ENCODE measurements at regions of chr17 and their contacts with region 1.

Region 1: DNA sequence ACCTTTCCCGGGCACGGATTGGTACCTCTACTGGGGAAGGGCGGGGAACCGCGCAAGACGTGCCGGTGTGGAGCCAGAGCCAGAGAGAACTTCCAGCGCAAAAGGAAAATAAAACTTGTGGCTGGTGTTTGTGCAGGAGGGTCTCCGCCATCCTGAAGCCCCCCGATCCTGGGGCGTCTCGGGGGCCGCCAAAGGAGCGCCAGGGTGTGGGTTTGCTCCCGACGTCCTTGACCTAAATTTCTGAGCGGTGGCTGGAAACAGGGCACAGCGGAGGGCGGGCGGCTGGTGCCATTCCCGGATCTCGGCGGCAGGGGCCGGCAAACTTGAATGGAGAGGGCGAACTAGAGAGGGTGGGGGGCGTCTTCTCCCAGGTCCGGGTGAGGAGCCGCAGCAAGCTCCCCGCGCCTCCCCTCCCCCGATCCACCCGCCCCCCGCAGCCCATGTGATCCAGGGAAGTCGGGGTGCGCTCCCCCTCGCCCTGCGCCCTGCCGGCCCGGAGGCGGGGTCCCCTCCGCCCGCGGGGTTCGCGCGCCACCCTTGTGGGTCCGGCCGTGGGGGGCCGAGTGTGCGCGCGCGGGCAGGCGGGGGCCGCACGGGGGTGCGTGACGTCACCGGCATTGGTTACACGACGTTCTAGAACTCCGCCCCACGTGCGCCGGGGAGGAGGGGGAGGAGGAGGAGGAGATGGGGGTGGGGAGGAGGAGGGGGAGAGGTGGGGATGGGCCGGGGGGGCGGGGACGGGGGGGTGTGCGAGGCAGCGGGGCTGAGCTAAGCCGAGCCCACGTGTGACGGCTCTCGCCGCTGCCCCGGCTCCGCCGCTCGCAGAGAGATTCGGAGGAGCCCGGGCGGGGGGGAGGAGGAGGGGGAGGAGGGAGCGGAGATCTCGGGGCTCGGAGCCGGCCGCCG is at the start of gene MSI2:
- DNase-seq: peak; percentile 87 to 97 (median 92)
- ATAC-seq: peak; percentile 76
- H3K4me3 ChIP-seq: peak within 1 kb of the TSS; percentile 73 to 81
- H3K4me3 Mint-ChIP-seq: peak within 1 kb of the TSS; percentile 92
- H3K27ac ChIP-seq: peak within 1 kb of the TSS; percentile 64 to 84
- H3K27ac Mint-ChIP-seq: peak within 1 kb of the TSS; percentile 93
- H3K4me1 ChIP-seq: peaks cover 37% of the 10 kb centered on the region
- H3K4me1 Mint-ChIP-seq: peaks cover 49% of the 10 kb centered on the region
- H3K27me3 ChIP-seq: no peaks in the 10 kb centered on the region
- H3K27me3 Mint-ChIP-seq: no peaks in the 10 kb centered on the region
- CTCF ChIP-seq: no peak
- total RNA-seq, gene MSI2: 130 to 135 TPM

Region 2: DNA sequence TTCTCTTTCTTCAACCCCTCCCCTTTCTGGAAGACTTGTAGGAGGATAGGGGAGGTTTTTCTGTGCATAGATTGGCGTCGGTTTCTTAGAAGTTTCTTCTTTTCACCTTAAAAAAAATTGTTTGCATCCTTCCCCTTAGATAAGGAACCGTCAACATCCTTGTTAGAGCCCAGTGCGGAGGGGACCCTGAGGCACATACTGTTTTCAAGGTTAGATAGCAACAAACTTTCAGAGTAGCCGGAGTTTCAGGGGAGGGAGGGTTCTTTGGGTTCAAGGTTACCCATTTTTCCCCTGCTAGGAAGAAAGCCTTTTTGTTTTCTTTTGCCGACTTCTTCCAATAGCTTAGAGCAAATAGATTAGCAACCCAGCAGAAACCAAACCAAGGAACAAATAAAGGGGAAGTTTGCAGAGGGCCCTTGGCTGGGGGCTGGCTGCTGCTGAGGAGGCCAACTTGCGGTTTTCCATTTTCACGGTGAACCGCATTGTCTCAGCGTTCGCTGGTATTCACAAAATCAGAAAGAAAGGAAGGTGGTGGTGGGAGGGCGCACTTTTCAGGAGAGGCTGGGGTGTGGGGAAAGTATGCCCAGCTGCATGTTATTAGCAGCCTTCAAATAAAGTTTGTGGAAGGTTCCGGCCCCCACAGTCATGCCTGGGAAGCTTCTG is 29.1 kb after region 1 on chr17:
- CTCF ChIA-PET with region 1: no interaction called
- POLR2A ChIA-PET with region 1: interaction called, 3 read pairs
- intact Hi-C with region 1: loop called in 1 of 2 experiments (anchors 2 kb)
- DNase-seq: peak in 6 of 9 experiments; percentile 16 to 58 (median 36)
- ATAC-seq: peak; percentile 24
- H3K4me3 ChIP-seq: no peak overlapping the region
- H3K4me3 Mint-ChIP-seq: peak overlapping the region; percentile 50
- H3K27ac ChIP-seq: peak overlapping the region in 1 of 2 experiments; percentile 1
- H3K27ac Mint-ChIP-seq: peak overlapping the region; percentile 66
- H3K4me1 ChIP-seq: peaks cover 39% of the 10 kb centered on the region
- H3K4me1 Mint-ChIP-seq: peaks cover 79% of the 10 kb centered on the region
- H3K27me3 ChIP-seq: no peaks in the 10 kb centered on the region
- H3K27me3 Mint-ChIP-seq: no peaks in the 10 kb centered on the region
- CTCF ChIP-seq: no peak

Region 3: GRCh38 chr17:57604771-57605674 is 349.0 kb after region 1 on chr17:
- CTCF ChIA-PET with region 1: no interaction called
- POLR2A ChIA-PET with region 1: no interaction called
- intact Hi-C with region 1: loop called (anchors 5 kb)
- DNase-seq: peak in 8 of 9 experiments; percentile 15 to 83 (median 60)
- ATAC-seq: peak; percentile 60
- H3K4me3 ChIP-seq: peak overlapping the region in 1 of 2 experiments; percentile 8
- H3K4me3 Mint-ChIP-seq: peak overlapping the region; percentile 76
- H3K27ac ChIP-seq: peak overlapping the region; percentile 67 to 81
- H3K27ac Mint-ChIP-seq: peak overlapping the region; percentile 94
- H3K4me1 ChIP-seq: peaks cover 99% of the 10 kb centered on the region
- H3K4me1 Mint-ChIP-seq: peaks cover 95% of the 10 kb centered on the region
- H3K27me3 ChIP-seq: no peaks in the 10 kb centered on the region
- H3K27me3 Mint-ChIP-seq: no peaks in the 10 kb centered on the region
- CTCF ChIP-seq: no peak

Region 4: GRCh38 chr17:58006924-58007780 is 751.1 kb after region 1 on chr17 and contains the start of gene SRSF1:
- CTCF ChIA-PET with region 1: no interaction called
- POLR2A ChIA-PET with region 1: no interaction called
- intact Hi-C with region 1: loop called (anchors 2 kb)
- DNase-seq: peak; percentile 93 to 100 (median 98)
- ATAC-seq: peak; percentile 86
- H3K4me3 ChIP-seq: peak within 1 kb of the TSS; percentile 90 to 100
- H3K4me3 Mint-ChIP-seq: peak within 1 kb of the TSS; percentile 100
- H3K27ac ChIP-seq: peak within 1 kb of the TSS; percentile 85 to 97
- H3K27ac Mint-ChIP-seq: peak within 1 kb of the TSS; percentile 100
- H3K4me1 ChIP-seq: peaks cover 36% of the 10 kb centered on the region
- H3K4me1 Mint-ChIP-seq: peaks cover 55% of the 10 kb centered on the region
- H3K27me3 ChIP-seq: no peaks in the 10 kb centered on the region
- H3K27me3 Mint-ChIP-seq: no peaks in the 10 kb centered on the region
- CTCF ChIP-seq: no peak
- total RNA-seq, gene SRSF1: 79.2 to 94.1 TPM

Region 5: DNA sequence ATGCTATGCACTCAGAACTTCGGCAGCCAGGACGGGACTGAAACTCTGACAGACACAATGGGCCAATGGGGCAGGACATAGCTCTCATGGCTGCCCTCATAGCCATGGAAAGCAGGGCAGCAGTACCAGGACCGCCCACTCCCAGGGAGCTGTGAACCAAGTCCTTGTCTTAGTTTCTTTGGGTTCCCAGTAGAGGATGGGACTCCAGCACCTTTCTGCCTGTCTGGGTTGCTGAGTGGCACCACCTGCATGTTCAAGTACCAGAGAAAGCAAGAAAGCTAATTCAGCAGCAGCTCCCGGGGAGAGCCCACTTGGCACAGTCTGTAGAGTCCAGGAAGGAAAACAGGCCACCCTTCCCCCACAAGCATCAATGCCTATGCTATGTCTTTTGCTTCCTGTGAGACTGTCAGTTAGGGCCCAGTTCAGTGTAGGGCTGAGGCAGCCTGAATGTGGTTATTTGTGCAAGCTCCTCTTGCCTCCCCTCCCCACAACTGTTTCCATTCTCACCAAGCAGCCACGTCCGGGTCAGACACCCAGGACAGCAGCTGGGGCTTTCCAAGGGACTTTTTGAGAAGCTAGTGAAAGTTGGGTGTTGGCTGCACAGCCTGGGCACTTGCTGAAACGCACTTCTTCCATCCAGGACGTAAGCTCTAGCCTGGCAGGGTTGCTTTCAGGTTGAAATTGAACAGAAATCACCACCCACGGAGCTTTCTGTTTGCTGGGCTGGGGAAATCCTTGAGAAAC is 1088.2 kb after region 1 on chr17:
- CTCF ChIA-PET with region 1: no interaction called
- POLR2A ChIA-PET with region 1: no interaction called
- intact Hi-C with region 1: loop called in 1 of 2 experiments (anchors 10 kb)
- DNase-seq: peak; percentile 61 to 98 (median 85)
- ATAC-seq: peak; percentile 72
- H3K4me3 ChIP-seq: peak overlapping the region; percentile 53 to 66
- H3K4me3 Mint-ChIP-seq: peak overlapping the region; percentile 81
- H3K27ac ChIP-seq: peak overlapping the region; percentile 79 to 99
- H3K27ac Mint-ChIP-seq: peak overlapping the region; percentile 95
- H3K4me1 ChIP-seq: peaks cover 91% of the 10 kb centered on the region
- H3K4me1 Mint-ChIP-seq: peaks cover 86% of the 10 kb centered on the region
- H3K27me3 ChIP-seq: no peaks in the 10 kb centered on the region
- H3K27me3 Mint-ChIP-seq: no peaks in the 10 kb centered on the region
- CTCF ChIP-seq: no peak